Thyroid gland (tissue), 4 donors: ENCODE measurements at regions of chr6 and their contacts with region 1.

Region 1: GRCh38 chr6:26122793-26123674 is 35.8 kb downstream of the HFE start:
- DNase-seq: peak; percentile 98 to 99
- H3K4me3 ChIP-seq: peak overlapping the region; percentile 82 to 91 (median 90)
- H3K27ac ChIP-seq: peak overlapping the region; percentile 93 to 99 (median 97)
- H3K4me1 ChIP-seq: peaks cover 18 to 24% of the 10 kb centered on the region in 2 donors
- H3K27me3 ChIP-seq: no peaks in the 10 kb centered on the region
- CTCF ChIP-seq: peak in 1 of 6 experiments; percentile 10
- POLR2A ChIP-seq: peak; percentile 54 to 92

Region 2: GRCh38 chr6:26156076-26156849 is 33.2 kb after region 1 on chr6:
- intact Hi-C with region 1: loop called (anchors 2 kb)
- DNase-seq: peak; percentile 91 to 94
- H3K4me3 ChIP-seq: peak overlapping the region; percentile 64 to 83 (median 70)
- H3K27ac ChIP-seq: peak overlapping the region; percentile 93 to 99 (median 99)
- H3K4me1 ChIP-seq: peaks cover 8 to 17% of the 10 kb centered on the region in 2 donors
- H3K27me3 ChIP-seq: no peaks in the 10 kb centered on the region
- CTCF ChIP-seq: no peak
- POLR2A ChIP-seq: peak; percentile 99

Region 3: DNA sequence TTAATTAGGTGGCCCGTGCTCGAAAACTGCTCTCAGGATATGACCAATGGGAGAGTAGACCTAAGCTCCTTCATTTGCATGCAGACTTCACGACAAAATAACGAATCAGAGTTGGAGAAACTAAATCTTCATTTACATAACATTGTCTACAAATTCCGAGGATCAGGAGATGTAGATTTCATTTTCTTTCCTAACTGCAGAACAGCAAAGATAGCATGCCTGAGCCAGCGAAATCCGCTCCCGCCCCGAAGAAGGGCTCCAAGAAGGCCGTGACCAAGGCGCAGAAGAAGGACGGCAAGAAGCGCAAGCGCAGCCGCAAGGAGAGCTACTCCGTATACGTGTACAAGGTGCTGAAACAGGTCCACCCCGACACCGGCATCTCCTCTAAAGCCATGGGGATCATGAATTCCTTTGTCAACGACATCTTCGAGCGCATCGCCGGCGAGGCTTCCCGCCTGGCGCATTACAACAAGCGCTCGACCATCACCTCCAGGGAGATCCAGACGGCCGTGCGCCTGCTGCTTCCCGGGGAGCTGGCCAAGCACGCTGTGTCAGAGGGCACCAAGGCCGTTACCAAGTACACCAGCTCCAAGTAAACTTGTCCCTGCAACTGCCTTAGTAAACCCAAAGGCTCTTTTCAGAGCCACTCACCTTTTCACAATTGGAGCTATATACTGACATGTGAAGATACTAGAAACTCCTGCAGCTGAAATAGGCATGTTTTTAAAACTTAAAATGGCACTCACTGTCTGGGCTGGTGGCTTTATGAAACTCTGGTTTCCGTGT is 60.7 kb after region 1 on chr6:
- intact Hi-C with region 1: loop called (anchors 10 kb)
- DNase-seq: peak; percentile 68 to 71
- H3K4me3 ChIP-seq: peak overlapping the region in 2 of 3 donors; percentile 25 to 30
- H3K27ac ChIP-seq: peak overlapping the region; percentile 69 to 89 (median 75)
- H3K4me1 ChIP-seq: peaks cover 3 to 4% of the 10 kb centered on the region in 2 donors
- H3K27me3 ChIP-seq: no peaks in the 10 kb centered on the region
- CTCF ChIP-seq: no peak
- POLR2A ChIP-seq: peak; percentile 27 to 95

Region 4: GRCh38 chr6:26363882-26364701 is 241.1 kb after region 1 on chr6:
- intact Hi-C with region 1: no loop called
- DNase-seq: no peak
- H3K4me3 ChIP-seq: peak overlapping the region in 1 of 3 donors; percentile 83
- H3K27ac ChIP-seq: peak overlapping the region; percentile 83 to 95 (median 87)
- H3K4me1 ChIP-seq: peaks cover 0 to 3% of the 10 kb centered on the region in 2 donors
- H3K27me3 ChIP-seq: no peaks in the 10 kb centered on the region
- CTCF ChIP-seq: no peak
- POLR2A ChIP-seq: no peak